BJ (cell line): ENCODE measurements at regions of chr1 and their contacts with region 1.

Region 1: GRCh38 chr1:31617917-31618660 is 600 bp downstream of the HCRTR1 start:
- DNase-seq: no peak
- H3K4me3 ChIP-seq: peak overlapping the region; percentile 47
- H3K27me3 ChIP-seq: peaks cover 12% of the 10 kb centered on the region
- CTCF ChIP-seq: peak; percentile 95

Region 2: GRCh38 chr1:31564134-31564989 is 53.7 kb before region 1 on chr1:
- CTCF ChIA-PET with region 1: interaction called, 23 read pairs
- POLR2A ChIA-PET with region 1: no interaction called
- DNase-seq: no peak
- H3K4me3 ChIP-seq: no peak overlapping the region
- H3K27me3 ChIP-seq: peaks cover 1% of the 10 kb centered on the region; the same call in 1 of the 2 replicates
- CTCF ChIP-seq: peak; percentile 80

Region 3: GRCh38 chr1:31607360-31607759 is 10.7 kb before region 1 on chr1:
- CTCF ChIA-PET with region 1: interaction called, 22 read pairs
- POLR2A ChIA-PET with region 1: no interaction called
- DNase-seq: no peak
- H3K4me3 ChIP-seq: no peak overlapping the region
- H3K27me3 ChIP-seq: 0 out of 2 replicates have a peak, but pooled peaks cover 3% of the 10 kb centered on the region
- CTCF ChIP-seq: no peak